ENCODE measurements at regions of chr4 and their contacts with region 1.

Region 1: DNA sequence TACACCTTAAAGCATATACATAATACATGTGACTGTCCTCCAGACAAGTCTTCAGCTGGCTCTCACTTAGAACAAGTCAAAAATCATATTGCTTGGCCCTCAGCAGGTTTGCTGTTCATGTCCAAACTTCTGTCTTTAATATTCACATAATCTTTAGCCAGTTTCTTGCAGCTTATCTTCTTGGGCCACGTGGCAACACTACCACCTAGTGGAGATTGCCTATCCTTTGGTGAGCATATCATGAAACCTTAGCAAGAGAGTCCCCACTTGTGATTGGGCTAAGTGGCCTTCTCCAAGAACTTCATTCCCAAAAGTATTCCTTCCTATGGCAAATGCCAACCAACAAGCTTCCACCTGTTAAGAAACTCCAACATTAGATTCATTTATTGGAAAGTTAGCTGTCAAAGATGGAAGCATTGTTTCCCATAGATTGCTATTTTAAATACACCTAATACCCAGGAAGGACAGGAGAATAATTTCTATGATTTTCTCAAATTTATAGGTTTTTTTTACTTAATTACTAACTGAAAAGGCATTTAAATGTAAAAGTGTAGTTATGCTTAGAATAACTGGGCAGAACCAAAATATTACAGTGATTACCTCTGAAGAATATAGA is 231.9 kb upstream of the INTU start:
- DNase-seq: peak; percentile 83
- ATAC-seq: peak; percentile 91
- H3K4me3 ChIP-seq: no peak overlapping the region
- H3K27ac ChIP-seq: no peak overlapping the region
- H3K4me1 ChIP-seq: peaks cover 2% of the 10 kb centered on the region; the same call in 1 of the 2 replicates
- H3K27me3 ChIP-seq: peaks cover 4% of the 10 kb centered on the region; the same call in 1 of the 2 replicates
- CTCF ChIP-seq: peak; percentile 90
- POLR2A ChIP-seq: no peak
- RAD21 ChIP-seq: peak; percentile 94

Region 2: DNA sequence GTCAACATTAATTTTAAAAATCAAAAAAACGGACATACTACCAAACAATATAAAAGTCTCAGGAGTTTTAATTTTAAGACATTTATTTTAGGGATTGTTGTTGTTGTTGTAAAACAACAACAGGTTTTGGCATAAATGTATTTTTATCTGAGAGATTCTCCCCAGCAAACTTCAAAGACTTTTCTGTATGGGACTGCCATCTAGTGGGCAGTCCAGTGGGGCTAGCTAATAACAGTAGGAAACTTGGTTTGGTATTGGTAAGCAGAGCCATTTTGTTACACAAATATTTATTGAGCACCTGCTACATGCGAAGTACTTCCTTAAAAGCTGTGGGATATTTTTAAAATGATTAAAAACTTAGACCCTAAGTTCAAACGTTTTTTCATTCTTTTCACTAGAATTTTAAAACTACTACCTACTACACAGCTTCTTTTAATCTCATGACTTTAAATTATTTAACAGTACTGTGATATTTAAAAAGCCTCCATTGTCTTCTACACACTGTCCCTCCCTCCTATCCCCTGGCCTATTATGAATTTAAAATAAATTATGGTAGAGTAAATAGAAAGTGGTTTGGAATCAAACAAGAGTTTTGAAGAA is 796.5 kb before region 1 on chr4:
- CTCF ChIA-PET with region 1: interaction called, 3 read pairs
- POLR2A ChIA-PET with region 1: no interaction called
- dilution Hi-C with region 1: no loop called
- in situ Hi-C with region 1: no loop called
- intact Hi-C with region 1: loop called (anchors 5 kb)
- DNase-seq: peak; percentile 61
- ATAC-seq: peak; percentile 76
- H3K4me3 ChIP-seq: no peak overlapping the region
- H3K27ac ChIP-seq: no peak overlapping the region
- H3K4me1 ChIP-seq: no peaks in the 10 kb centered on the region
- H3K27me3 ChIP-seq: no peaks in the 10 kb centered on the region
- CTCF ChIP-seq: peak; percentile 78
- POLR2A ChIP-seq: no peak
- RAD21 ChIP-seq: peak; percentile 73

Region 3: DNA sequence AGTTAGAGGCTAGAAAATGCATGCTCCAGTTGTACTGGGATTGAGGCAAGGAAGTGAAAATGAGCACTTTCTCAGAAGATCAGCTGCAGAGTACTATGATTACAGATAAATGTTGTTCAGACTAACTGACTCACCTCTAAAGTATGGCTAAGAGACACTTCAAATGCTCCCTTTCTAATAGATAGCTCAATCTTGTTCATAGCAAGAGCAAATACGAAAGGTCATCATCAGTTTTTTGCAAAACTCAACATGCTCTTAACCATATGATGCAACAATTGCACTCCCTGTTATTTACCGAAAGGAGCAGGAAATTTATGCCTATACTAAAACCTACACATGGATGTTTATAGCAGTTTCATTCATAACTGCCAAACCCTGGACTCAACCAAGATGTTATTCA is 606.5 kb before region 1 on chr4:
- CTCF ChIA-PET with region 1: no interaction called
- POLR2A ChIA-PET with region 1: no interaction called
- dilution Hi-C with region 1: no loop called
- in situ Hi-C with region 1: no loop called
- intact Hi-C with region 1: loop called (anchors 5 kb)
- DNase-seq: peak; percentile 68
- ATAC-seq: peak; percentile 80
- H3K4me3 ChIP-seq: no peak overlapping the region
- H3K27ac ChIP-seq: no peak overlapping the region
- H3K4me1 ChIP-seq: peaks cover under 1% of the 10 kb centered on the region
- H3K27me3 ChIP-seq: no peaks in the 10 kb centered on the region
- CTCF ChIP-seq: no peak
- POLR2A ChIP-seq: no peak
- RAD21 ChIP-seq: no peak

Region 4: DNA sequence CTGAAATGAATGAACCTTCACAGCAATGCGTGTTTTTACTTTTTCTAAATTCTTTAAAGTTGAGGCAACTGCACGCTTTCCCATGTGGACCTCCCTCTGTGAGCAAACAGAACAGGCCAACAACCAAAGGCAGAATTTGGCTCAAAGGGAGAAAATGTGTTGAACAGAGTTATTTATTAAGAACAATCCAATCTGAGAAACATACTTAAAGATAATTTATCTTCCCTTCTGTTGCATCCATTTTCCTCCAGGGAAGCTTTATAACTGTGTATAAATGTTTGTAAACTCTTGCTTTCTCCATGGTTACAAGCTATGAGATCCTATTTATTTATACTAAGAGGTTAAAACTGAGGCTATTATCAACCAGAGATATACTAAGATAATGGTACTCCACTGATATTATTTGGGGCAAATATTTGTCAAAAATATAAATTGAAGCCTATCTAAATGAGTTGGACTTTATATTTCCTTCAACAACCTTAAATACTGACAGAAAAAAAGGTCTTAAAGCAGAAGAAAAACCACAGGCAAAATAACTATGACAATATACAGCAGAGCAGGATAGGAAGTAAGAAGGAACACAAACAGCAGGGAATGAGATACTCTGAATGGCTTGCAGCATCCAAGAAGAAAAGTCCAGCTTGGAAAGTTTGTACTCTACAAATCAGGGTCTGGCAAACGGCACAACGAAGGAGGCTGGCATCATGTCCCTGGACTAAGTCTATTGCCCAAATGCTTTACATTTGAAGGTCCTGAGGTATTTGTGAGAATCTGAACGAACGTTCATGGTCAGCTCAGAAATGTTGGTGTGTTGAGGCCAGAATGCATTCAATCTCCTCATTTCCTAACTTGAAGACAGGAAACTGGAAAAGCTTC is 431.2 kb before region 1 on chr4:
- CTCF ChIA-PET with region 1: no interaction called
- POLR2A ChIA-PET with region 1: no interaction called
- dilution Hi-C with region 1: no loop called
- in situ Hi-C with region 1: no loop called
- intact Hi-C with region 1: loop called (anchors 5 kb)
- DNase-seq: no peak
- ATAC-seq: peak; percentile 69
- H3K4me3 ChIP-seq: no peak overlapping the region
- H3K27ac ChIP-seq: no peak overlapping the region
- H3K4me1 ChIP-seq: peaks cover 2% of the 10 kb centered on the region; the same call in 1 of the 2 replicates
- H3K27me3 ChIP-seq: no peaks in the 10 kb centered on the region
- CTCF ChIP-seq: no peak
- POLR2A ChIP-seq: no peak
- RAD21 ChIP-seq: no peak

Region 5: GRCh38 chr4:127538016-127538415 is 137.2 kb after region 1 on chr4:
- CTCF ChIA-PET with region 1: no interaction called
- POLR2A ChIA-PET with region 1: no interaction called
- dilution Hi-C with region 1: no loop called
- in situ Hi-C with region 1: no loop called
- intact Hi-C with region 1: loop called (anchors 5 kb)
- DNase-seq: no peak
- ATAC-seq: no peak
- H3K4me3 ChIP-seq: no peak overlapping the region
- H3K27ac ChIP-seq: no peak overlapping the region
- H3K4me1 ChIP-seq: peaks cover 3% of the 10 kb centered on the region; the same call in 1 of the 2 replicates
- H3K27me3 ChIP-seq: peaks cover 2% of the 10 kb centered on the region; the same call in 1 of the 2 replicates
- CTCF ChIP-seq: no peak
- POLR2A ChIP-seq: no peak
- RAD21 ChIP-seq: no peak